Naive thymus-derived CD4-positive, alpha-beta T cell (primary cell): ENCODE measurements at regions of chr2 and their contacts with region 1.

Region 1: DNA sequence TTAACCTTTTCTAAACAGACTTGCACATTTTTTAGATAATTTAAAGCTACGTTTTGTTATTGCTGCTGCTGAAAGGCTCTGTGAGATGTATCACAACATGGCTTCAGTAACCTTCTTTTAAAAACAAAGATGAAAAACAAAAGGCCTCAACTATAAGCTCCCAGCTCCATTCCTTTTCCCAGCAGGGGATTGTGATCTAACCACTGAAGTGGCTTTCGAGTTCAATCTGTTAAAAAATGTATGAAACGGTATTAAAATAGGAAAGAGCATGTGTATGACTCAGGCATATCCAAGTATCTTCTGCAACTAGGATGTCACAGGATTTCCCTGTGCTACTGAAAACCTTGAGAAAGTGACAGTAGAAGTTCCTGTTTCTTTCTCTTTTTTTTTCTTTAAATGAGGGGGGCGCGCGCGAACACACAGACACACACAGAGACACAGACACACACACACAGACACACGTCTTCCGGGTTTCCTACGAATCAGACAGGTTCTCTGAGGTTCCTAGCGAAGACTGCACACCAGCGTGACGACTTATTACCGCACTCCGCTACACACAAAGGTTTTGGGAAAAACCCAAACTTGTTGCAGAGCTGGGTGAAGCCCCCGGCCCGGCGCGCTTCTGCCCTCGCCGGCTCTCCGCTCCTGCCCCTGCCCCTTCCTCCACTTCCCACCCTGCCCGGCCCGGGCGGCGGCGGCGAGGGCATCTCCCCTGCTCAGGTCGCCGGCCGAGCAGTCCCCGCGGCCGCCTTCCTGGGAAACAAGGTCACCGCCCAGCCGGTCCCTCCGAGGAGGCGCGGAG is 86.8 kb downstream of the RBMS1 start:
- DNase-seq: peak; percentile 60 to 95 (median 85)
- ATAC-seq: peak; percentile 92
- H3K4me3 ChIP-seq: peak overlapping the region; percentile 57
- H3K4me3 Mint-ChIP-seq: peak overlapping the region; percentile 87 to 99 (median 92)
- H3K27ac ChIP-seq: peak overlapping the region; percentile 99
- H3K27ac Mint-ChIP-seq: peak overlapping the region; percentile 90 to 99 (median 95)
- H3K4me1 ChIP-seq: peaks cover 54 to 64% of the 10 kb centered on the region in 2 donors
- H3K4me1 Mint-ChIP-seq: peaks cover 37 to 89% (median 80%) of the 10 kb centered on the region in 7 donors
- H3K27me3 ChIP-seq: no peaks in the 10 kb centered on the region
- H3K27me3 Mint-ChIP-seq: peaks cover 0 to 4% (median 0%) of the 10 kb centered on the region in 5 donors

Region 2: GRCh38 chr2:159573846-159574606 is 832.8 kb before region 1 on chr2:
- CTCF ChIA-PET with region 1: no interaction called
- POLR2A ChIA-PET with region 1: no interaction called
- intact Hi-C with region 1: no loop called
- DNase-seq: no peak
- ATAC-seq: peak; percentile 24
- H3K4me3 ChIP-seq: no peak overlapping the region
- H3K4me3 Mint-ChIP-seq: no peak overlapping the region
- H3K27ac ChIP-seq: no peak overlapping the region
- H3K27ac Mint-ChIP-seq: no peak overlapping the region
- H3K4me1 ChIP-seq: no peaks in the 10 kb centered on the region
- H3K4me1 Mint-ChIP-seq: peaks cover 0 to 2% (median 0%) of the 10 kb centered on the region in 7 donors
- H3K27me3 ChIP-seq: no peaks in the 10 kb centered on the region
- H3K27me3 Mint-ChIP-seq: peaks cover 0 to 2% (median 0%) of the 10 kb centered on the region in 5 donors

Region 3: GRCh38 chr2:159650574-159650973 is 756.2 kb before region 1 on chr2:
- CTCF ChIA-PET with region 1: no interaction called
- POLR2A ChIA-PET with region 1: no interaction called
- intact Hi-C with region 1: no loop called
- DNase-seq: no peak
- ATAC-seq: peak; percentile 20
- H3K4me3 ChIP-seq: no peak overlapping the region
- H3K4me3 Mint-ChIP-seq: no peak overlapping the region
- H3K27ac ChIP-seq: no peak overlapping the region
- H3K27ac Mint-ChIP-seq: no peak overlapping the region
- H3K4me1 ChIP-seq: no peaks in the 10 kb centered on the region
- H3K4me1 Mint-ChIP-seq: no peaks in the 10 kb centered on the region
- H3K27me3 ChIP-seq: no peaks in the 10 kb centered on the region
- H3K27me3 Mint-ChIP-seq: no peaks in the 10 kb centered on the region

Region 4: GRCh38 chr2:159849160-159849813 is 557.5 kb before region 1 on chr2:
- CTCF ChIA-PET with region 1: no interaction called
- POLR2A ChIA-PET with region 1: no interaction called
- intact Hi-C with region 1: no loop called
- DNase-seq: no peak
- ATAC-seq: no peak
- H3K4me3 ChIP-seq: no peak overlapping the region
- H3K4me3 Mint-ChIP-seq: no peak overlapping the region
- H3K27ac ChIP-seq: no peak overlapping the region
- H3K27ac Mint-ChIP-seq: no peak overlapping the region
- H3K4me1 ChIP-seq: no peaks in the 10 kb centered on the region
- H3K4me1 Mint-ChIP-seq: no peaks in the 10 kb centered on the region
- H3K27me3 ChIP-seq: no peaks in the 10 kb centered on the region
- H3K27me3 Mint-ChIP-seq: no peaks in the 10 kb centered on the region

Region 5: GRCh38 chr2:160324161-160324800 is 82.5 kb before region 1 on chr2:
- CTCF ChIA-PET with region 1: interaction called, 4 read pairs
- POLR2A ChIA-PET with region 1: no interaction called
- intact Hi-C with region 1: loop called in 1 of 2 experiments (anchors 2 kb)
- DNase-seq: peak in 5 of 9 donors; percentile 10 to 38 (median 21)
- ATAC-seq: peak; percentile 64
- H3K4me3 ChIP-seq: no peak overlapping the region
- H3K4me3 Mint-ChIP-seq: peak overlapping the region in 1 of 10 donors; percentile 40
- H3K27ac ChIP-seq: no peak overlapping the region
- H3K27ac Mint-ChIP-seq: peak overlapping the region in 3 of 9 donors; percentile 10 to 65 (median 32)
- H3K4me1 ChIP-seq: peaks cover 10 to 58% of the 10 kb centered on the region in 2 donors
- H3K4me1 Mint-ChIP-seq: peaks cover 61 to 98% (median 96%) of the 10 kb centered on the region in 7 donors
- H3K27me3 ChIP-seq: no peaks in the 10 kb centered on the region
- H3K27me3 Mint-ChIP-seq: no peaks in the 10 kb centered on the region

Region 6: GRCh38 chr2:160394153-160394552 is 12.6 kb before region 1 on chr2:
- CTCF ChIA-PET with region 1: no interaction called
- POLR2A ChIA-PET with region 1: interaction called, 10 read pairs
- intact Hi-C with region 1: loop called (anchors 1 kb)
- DNase-seq: peak in 4 of 9 donors; percentile 27 to 53 (median 48)
- ATAC-seq: peak; percentile 94
- H3K4me3 ChIP-seq: no peak overlapping the region
- H3K4me3 Mint-ChIP-seq: peak overlapping the region; percentile 29 to 76 (median 60)
- H3K27ac ChIP-seq: peak overlapping the region; percentile 26
- H3K27ac Mint-ChIP-seq: peak overlapping the region; percentile 33 to 88 (median 71)
- H3K4me1 ChIP-seq: peaks cover 55 to 73% of the 10 kb centered on the region in 2 donors
- H3K4me1 Mint-ChIP-seq: peaks cover 0 to 68% (median 52%) of the 10 kb centered on the region in 7 donors
- H3K27me3 ChIP-seq: no peaks in the 10 kb centered on the region
- H3K27me3 Mint-ChIP-seq: no peaks in the 10 kb centered on the region

Region 7: DNA sequence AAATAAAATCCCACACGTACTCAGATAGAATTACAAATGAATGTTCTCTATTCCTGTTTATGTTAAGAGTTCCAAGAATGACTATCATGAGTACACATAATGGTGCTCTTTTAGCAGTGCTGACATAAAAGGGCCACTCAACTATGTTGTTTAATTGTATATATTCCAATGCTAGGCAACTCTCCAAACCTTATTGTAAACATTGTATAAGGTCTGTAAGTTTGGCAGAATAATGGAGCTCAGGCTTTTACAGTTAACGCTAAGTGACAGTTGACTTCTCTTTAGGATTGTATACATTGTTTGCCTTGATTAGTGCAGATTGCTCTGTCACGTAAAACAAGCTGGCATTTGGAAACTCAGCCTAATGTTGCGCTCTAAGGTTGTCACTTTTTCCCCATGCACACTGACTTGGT is 66.1 kb after region 1 on chr2:
- CTCF ChIA-PET with region 1: no interaction called
- POLR2A ChIA-PET with region 1: interaction called, 3 read pairs
- intact Hi-C with region 1: loop called in 1 of 2 experiments (anchors 5 kb)
- DNase-seq: peak in 1 of 9 donors; percentile 19
- ATAC-seq: no peak
- H3K4me3 ChIP-seq: no peak overlapping the region
- H3K4me3 Mint-ChIP-seq: peak overlapping the region in 9 of 10 donors; percentile 40 to 77 (median 64)
- H3K27ac ChIP-seq: peak overlapping the region; percentile 70
- H3K27ac Mint-ChIP-seq: peak overlapping the region; percentile 78 to 98 (median 90)
- H3K4me1 ChIP-seq: peaks cover 0 to 56% of the 10 kb centered on the region in 2 donors
- H3K4me1 Mint-ChIP-seq: peaks cover 22 to 96% (median 88%) of the 10 kb centered on the region in 7 donors
- H3K27me3 ChIP-seq: no peaks in the 10 kb centered on the region
- H3K27me3 Mint-ChIP-seq: no peaks in the 10 kb centered on the region

Region 8: DNA sequence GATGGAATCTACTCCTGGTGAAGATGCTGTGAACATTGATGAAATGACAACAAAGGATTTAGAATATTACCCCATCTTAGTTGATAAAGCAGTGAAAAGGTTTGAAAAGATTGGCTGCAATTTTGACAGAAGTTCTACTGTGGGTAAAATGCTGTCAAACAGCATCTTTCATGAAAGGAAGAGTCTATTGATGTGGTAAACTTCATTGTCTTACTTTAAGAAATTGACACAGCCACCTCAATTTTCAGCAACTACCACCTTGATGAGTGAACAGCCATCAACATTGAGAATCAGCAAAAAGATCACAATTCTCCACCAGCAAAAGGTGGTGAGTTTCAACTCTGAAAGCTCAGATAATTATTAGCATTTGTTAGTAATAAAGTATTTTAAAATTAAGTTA is 397.1 kb after region 1 on chr2:
- CTCF ChIA-PET with region 1: no interaction called
- POLR2A ChIA-PET with region 1: no interaction called
- intact Hi-C with region 1: no loop called
- DNase-seq: peak in 7 of 9 donors; percentile 11 to 66 (median 36)
- ATAC-seq: peak; percentile 58
- H3K4me3 ChIP-seq: no peak overlapping the region
- H3K4me3 Mint-ChIP-seq: peak overlapping the region in 1 of 10 donors; percentile 4
- H3K27ac ChIP-seq: no peak overlapping the region
- H3K27ac Mint-ChIP-seq: peak overlapping the region in 3 of 9 donors; percentile 12 to 38 (median 19)
- H3K4me1 ChIP-seq: peaks cover 0 to 7% of the 10 kb centered on the region in 2 donors
- H3K4me1 Mint-ChIP-seq: peaks cover 3 to 10% (median 7%) of the 10 kb centered on the region in 7 donors
- H3K27me3 ChIP-seq: no peaks in the 10 kb centered on the region
- H3K27me3 Mint-ChIP-seq: no peaks in the 10 kb centered on the region

Region 9: GRCh38 chr2:160994141-160995002 is 587.6 kb after region 1 on chr2:
- CTCF ChIA-PET with region 1: no interaction called
- POLR2A ChIA-PET with region 1: no interaction called
- intact Hi-C with region 1: loop called in 1 of 2 experiments (anchors 2 kb)
- DNase-seq: peak; percentile 11 to 86 (median 80)
- ATAC-seq: peak; percentile 95
- H3K4me3 ChIP-seq: no peak overlapping the region
- H3K4me3 Mint-ChIP-seq: peak overlapping the region in 9 of 10 donors; percentile 4 to 76 (median 55)
- H3K27ac ChIP-seq: no peak overlapping the region
- H3K27ac Mint-ChIP-seq: peak overlapping the region in 7 of 9 donors; percentile 0 to 84 (median 26)
- H3K4me1 ChIP-seq: no peaks in the 10 kb centered on the region
- H3K4me1 Mint-ChIP-seq: peaks cover 5 to 13% (median 11%) of the 10 kb centered on the region in 7 donors
- H3K27me3 ChIP-seq: no peaks in the 10 kb centered on the region
- H3K27me3 Mint-ChIP-seq: peaks cover 0 to 13% (median 0%) of the 10 kb centered on the region in 5 donors

Region 10: DNA sequence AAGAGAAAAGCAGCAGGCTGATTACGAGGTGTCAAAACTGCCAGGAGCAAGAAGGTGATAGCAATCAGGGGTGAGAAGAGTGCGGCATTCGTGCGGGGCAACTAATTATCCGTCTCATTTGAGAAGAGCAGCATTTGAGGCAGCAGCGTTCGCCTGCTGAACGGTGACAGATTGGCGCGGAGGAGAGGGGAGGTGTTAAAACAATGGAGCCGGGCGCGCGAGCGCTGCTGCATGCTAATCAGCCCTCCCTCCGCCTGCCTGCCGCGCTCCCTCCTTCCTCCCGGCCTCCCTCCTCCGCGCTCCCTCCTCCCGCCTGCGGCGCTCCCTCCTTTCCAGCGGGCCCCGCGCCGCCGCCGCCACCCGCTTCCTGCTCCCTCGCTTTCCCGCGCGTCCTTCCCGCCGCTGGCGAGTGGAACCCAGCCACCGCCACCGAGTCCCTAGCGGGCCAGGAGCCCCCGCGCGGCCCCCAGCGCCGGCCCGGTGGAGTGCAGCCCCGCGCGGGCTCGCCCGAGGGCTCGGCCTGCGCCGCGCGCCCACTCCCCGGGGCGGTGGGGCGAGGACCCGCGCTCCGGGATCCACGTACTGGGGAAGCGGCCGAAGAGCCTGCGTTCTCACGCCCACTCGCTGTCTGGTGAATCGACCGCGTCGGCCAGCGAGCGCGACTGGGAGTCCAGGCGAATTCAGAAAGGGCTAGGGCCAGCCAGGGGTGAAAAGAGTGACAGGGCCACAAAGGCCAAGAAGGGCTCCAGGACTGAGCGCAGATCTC is 832.0 kb after region 1 on chr2:
- CTCF ChIA-PET with region 1: no interaction called
- POLR2A ChIA-PET with region 1: no interaction called
- intact Hi-C with region 1: loop called in 1 of 2 experiments (anchors 10 kb)
- DNase-seq: peak; percentile 35 to 70 (median 61)
- ATAC-seq: peak; percentile 80
- H3K4me3 ChIP-seq: peak overlapping the region; percentile 76
- H3K4me3 Mint-ChIP-seq: peak overlapping the region; percentile 83 to 98 (median 95)
- H3K27ac ChIP-seq: peak overlapping the region; percentile 27
- H3K27ac Mint-ChIP-seq: peak overlapping the region; percentile 57 to 90 (median 84)
- H3K4me1 ChIP-seq: peaks cover 17 to 26% of the 10 kb centered on the region in 2 donors
- H3K4me1 Mint-ChIP-seq: peaks cover 14 to 50% (median 43%) of the 10 kb centered on the region in 7 donors
- H3K27me3 ChIP-seq: no peaks in the 10 kb centered on the region
- H3K27me3 Mint-ChIP-seq: no peaks in the 10 kb centered on the region